ENCODE measurements at regions of chr1 and their contacts with region 1.

Region 1: DNA sequence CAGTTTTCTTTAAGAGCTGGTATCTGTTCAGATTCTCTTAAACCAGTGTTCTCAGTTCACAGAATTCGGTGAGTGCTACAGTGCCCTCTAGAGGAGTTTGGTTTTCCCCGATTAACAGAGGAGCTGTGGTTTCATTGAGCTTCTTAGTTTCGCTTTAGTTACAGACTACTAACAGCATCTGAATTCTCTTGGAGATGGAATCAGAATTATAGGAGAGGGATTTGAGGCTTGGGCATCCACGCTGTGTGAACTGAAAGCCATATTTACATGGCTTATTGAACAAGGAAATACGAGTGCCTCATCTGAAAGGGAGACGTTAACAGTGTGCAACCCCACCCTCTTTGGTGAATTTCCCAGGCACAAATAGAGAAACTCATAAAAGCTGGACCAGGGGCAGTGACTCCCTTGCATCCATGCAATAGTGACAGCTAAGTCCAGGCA is 202.0 kb downstream of the USH2A start:
- DNase-seq: peak; percentile 35
- H3K4me3 ChIP-seq: peak overlapping the region; percentile 51 to 54
- H3K27ac ChIP-seq: peak overlapping the region in 1 of 2 experiments; percentile 88; a peak in 2 of 4 replicates
- H3K4me1 ChIP-seq: peaks cover 0 to 16% of the 10 kb centered on the region in 2 experiments; a peak in 2 of 4 replicates
- H3K27me3 ChIP-seq: no peaks in the 10 kb centered on the region
- CTCF ChIP-seq: peak; percentile 86
- EP300 ChIP-seq: 0 out of 4 replicates have a peak, but pooled peaks of 1 of the 2 experiments have one; percentile 10
- RAD21 ChIP-seq: peak; percentile 83

Region 2: GRCh38 chr1:216175714-216176113 is 45.6 kb before region 1 on chr1:
- CTCF ChIA-PET with region 1: interaction called, 13 read pairs
- POLR2A ChIA-PET with region 1: no interaction called
- DNase-seq: no peak
- H3K4me3 ChIP-seq: no peak overlapping the region
- H3K27ac ChIP-seq: no peak overlapping the region
- H3K4me1 ChIP-seq: peaks cover 0 to 3% of the 10 kb centered on the region in 2 experiments; a peak in 2 of 4 replicates
- H3K27me3 ChIP-seq: no peaks in the 10 kb centered on the region
- CTCF ChIP-seq: no peak
- EP300 ChIP-seq: no peak
- RAD21 ChIP-seq: no peak

Region 3: GRCh38 chr1:216190438-216190837 is 30.8 kb before region 1 on chr1:
- CTCF ChIA-PET with region 1: interaction called, 20 read pairs
- POLR2A ChIA-PET with region 1: no interaction called
- DNase-seq: peak; percentile 30
- H3K4me3 ChIP-seq: no peak overlapping the region
- H3K27ac ChIP-seq: peak overlapping the region in 1 of 2 experiments; percentile 40; a peak in 1 of 4 replicates
- H3K4me1 ChIP-seq: peaks cover 0 to 6% of the 10 kb centered on the region in 2 experiments; a peak in 1 of 4 replicates
- H3K27me3 ChIP-seq: no peaks in the 10 kb centered on the region
- CTCF ChIP-seq: no peak
- EP300 ChIP-seq: peak in 1 of 2 experiments; percentile 89; a peak in 2 of 4 replicates
- RAD21 ChIP-seq: peak; percentile 18; the same call in 1 of the 2 replicates

Region 4: DNA sequence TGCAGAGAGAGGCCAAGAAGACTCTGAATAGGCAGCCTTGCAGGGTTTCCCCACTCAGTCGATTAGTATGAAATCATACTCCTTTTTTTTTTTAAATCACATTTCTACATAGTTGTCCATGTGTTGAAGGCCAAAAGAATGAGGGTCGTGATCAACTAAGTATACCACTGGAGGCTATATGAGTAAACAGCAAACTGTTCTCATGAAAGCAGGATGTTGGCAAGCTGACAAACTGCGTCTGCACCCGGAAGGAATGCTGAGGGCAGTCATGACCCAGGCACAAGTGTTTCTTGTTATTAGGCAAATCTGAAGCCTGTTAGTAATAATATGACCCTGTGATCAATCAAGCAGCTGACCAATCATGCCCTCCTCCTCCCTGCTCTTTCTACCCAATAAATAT is 11.2 kb before region 1 on chr1:
- CTCF ChIA-PET with region 1: interaction called, 16 read pairs
- POLR2A ChIA-PET with region 1: no interaction called
- DNase-seq: no peak
- H3K4me3 ChIP-seq: no peak overlapping the region
- H3K27ac ChIP-seq: no peak overlapping the region
- H3K4me1 ChIP-seq: peaks cover 0 to 6% of the 10 kb centered on the region in 2 experiments; a peak in 2 of 4 replicates
- H3K27me3 ChIP-seq: no peaks in the 10 kb centered on the region
- CTCF ChIP-seq: no peak
- EP300 ChIP-seq: no peak
- RAD21 ChIP-seq: no peak

Region 5: GRCh38 chr1:216566641-216567205 is 345.4 kb after region 1 on chr1:
- CTCF ChIA-PET with region 1: interaction called, 15 read pairs
- POLR2A ChIA-PET with region 1: no interaction called
- DNase-seq: no peak
- H3K4me3 ChIP-seq: no peak overlapping the region
- H3K27ac ChIP-seq: peak overlapping the region in 1 of 2 experiments; percentile 16; a peak in 1 of 4 replicates
- H3K4me1 ChIP-seq: no peaks in the 10 kb centered on the region; a peak in 2 of 4 replicates
- H3K27me3 ChIP-seq: no peaks in the 10 kb centered on the region
- CTCF ChIP-seq: peak; percentile 64
- EP300 ChIP-seq: no peak
- RAD21 ChIP-seq: peak; percentile 52